Right ventricle myocardium inferior (tissue), 1 donor: ENCODE measurements at regions of chr10 and their contacts with region 1.

Region 1: DNA sequence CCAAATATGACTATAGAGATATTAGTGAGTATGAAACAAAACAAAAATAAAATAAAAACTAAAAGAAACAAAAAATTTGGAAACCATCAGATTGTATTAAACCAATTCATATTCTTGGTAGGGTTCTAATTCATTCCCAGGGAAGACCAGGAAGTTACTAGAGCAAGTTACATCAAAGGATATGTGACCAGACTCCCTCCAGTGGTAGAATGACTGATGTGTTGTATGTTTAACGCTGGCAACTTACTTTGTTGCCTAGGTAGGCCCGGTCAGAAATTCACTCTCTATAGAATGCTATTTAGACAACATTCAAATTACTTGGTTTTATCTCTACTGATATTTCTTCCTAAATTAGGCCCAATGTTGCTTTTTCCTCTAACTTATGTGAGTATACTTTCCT is 5.2 kb downstream of the PHYHIPL start:
- DNase-seq: no peak
- ATAC-seq: no peak

Region 2: GRCh38 chr10:58518775-58519174 is 662.9 kb before region 1 on chr10:
- intact Hi-C with region 1: no loop called
- DNase-seq: no peak
- ATAC-seq: peak; percentile 26

Region 3: DNA sequence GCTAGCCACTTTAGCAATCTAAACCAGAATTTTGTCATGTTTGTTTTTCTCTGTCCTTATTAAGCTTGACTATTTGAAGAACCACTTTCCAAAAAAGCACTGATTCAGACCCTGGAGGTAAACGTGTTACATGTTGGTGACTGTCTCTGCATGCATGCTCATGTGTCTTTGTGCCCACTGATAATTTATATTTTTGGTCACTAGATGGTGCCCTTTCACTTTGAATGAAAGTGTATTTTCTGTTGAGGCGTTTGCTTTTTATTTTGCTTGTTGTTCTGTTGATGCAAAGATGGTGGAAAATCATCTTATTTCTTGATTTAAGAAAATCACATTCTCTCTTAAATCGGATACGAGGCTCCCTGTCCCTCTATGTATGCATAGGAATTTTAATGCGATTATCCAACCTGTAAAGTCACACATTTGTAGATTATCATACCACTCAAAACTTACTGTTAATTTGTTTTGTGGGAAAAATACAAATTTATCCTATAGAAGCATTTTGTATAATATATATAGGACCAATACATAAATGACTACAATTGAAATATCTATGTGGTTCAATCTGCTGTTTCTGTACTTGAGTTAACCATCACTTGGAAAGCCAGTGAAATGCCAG is 399.7 kb before region 1 on chr10:
- intact Hi-C with region 1: loop called (anchors 2 kb)
- DNase-seq: no peak
- ATAC-seq: no peak

Region 4: DNA sequence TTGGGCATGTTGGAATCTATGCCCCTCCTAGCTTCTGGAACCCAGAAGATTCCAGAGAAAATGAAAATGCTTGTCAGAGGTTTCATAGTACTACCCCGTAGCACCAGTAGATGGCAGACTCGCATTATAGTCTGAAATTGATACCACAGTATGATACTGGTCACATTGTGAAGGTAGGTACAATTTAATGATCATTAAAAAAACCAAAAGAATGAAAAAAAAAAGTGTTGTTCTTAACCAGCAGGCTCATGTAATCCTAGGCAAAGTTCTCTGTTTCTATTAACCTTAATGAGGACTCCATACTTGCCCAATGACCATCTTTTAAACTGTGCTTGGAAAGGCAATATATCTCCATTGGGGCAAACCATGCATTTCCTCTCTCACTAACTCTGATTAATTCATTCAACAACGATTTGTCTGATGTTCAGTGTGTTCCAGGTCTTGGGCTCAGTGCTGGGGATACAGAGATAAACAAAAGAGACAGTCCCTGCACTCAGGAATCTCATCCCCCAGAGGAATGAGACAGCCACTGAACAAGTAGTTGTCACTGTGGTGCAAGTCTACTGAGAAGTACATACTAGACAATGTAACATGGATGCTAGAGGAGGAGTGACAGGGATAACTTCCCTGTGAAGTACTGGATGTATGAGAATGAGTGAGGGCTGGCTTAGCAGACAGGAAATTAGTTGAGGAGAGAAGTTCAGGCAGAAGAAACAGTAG is 228.8 kb before region 1 on chr10:
- intact Hi-C with region 1: loop called (anchors 2 kb)
- DNase-seq: no peak
- ATAC-seq: peak; percentile 72

Region 5: GRCh38 chr10:58967551-58968388 is 213.9 kb before region 1 on chr10:
- intact Hi-C with region 1: loop called (anchors 5 kb)
- DNase-seq: peak; percentile 72
- ATAC-seq: peak; percentile 88

Region 6: DNA sequence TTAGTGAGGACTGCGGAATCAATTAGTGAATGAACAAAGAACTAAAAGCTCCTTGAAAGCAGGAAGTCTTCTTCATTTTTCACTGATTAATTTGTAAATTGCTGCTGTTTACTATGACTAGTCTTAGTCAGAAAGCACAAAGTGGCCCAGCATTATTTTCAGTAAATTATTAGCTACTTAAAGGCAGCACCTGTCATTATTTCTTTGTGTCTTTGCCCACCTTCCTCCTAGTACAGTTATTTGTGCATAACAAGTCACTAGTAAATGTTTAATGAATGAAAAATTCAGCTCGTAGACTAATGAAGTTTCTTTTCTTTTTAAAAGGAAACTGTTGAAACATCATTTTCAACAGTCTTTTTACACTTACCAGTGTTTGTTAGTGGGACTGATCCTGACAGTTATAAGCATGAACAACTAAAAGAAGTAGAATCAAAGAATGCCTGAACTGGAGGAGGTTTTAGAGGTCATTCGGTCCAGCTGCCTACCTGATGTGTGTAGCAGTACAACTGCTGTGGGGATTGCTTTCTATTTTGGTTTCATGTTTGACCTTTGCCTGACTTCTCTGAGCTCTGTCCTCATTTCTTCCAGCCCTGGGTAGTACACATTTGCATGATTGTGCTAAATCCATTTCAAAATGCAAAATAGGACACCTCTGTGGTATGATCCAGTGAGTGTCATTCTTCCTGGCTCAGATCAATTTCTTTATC is 145.2 kb before region 1 on chr10:
- intact Hi-C with region 1: no loop called
- DNase-seq: no peak
- ATAC-seq: peak; percentile 37

Region 7: GRCh38 chr10:59060852-59061251 is 120.8 kb before region 1 on chr10:
- intact Hi-C with region 1: no loop called
- DNase-seq: no peak
- ATAC-seq: no peak

Region 8: DNA sequence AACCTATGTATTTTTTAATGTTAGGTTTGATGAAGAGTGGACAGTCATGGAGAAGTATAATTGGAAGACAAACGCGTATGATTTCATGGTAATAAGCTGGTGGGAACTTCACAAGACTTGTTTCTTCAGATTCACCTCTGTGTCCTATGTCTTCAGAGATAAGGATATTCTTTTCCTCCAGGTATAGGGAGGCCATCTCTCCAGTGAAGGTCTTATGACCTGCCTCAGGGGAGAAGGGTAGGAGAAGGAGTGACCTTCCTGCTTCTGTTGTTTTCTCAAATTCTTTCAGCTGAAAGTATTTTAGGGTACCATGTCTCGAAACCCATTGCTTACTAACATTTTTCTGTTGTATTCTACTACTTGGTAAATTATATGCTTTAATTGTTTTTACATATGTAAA is 13.7 kb after region 1 on chr10:
- intact Hi-C with region 1: no loop called
- DNase-seq: no peak
- ATAC-seq: no peak